Activated CD4-positive, alpha-beta T cell treated with anti-CD3 and anti-CD28 coated beads, Interleukin-2, amount 10 ng/mL, durations not matched to agents 24 days and 14 days (primary cell): ENCODE measurements at regions of chr9 and their contacts with region 1.

Region 1: DNA sequence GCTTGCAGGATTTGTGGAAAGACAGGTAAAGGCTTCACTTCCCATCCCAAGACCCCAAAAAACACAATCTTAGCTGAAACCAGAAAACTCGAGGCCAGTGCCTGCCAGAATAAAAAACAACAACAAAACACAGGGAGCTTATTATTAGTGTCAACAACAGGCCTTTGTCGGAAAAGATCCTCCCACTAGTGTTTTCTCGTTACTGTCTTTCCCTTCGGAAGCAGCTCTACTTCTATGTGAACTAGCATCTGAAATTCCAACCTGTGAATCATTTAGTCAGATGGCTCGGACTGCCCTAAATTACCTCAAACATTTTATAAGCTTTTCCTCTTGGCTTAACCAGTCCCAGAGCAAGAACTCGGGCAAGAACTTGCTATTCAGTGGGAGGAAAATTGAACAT is 122.2 kb upstream of the GNA14 start:
- DNase-seq: no peak
- H3K4me3 Mint-ChIP-seq: no peak overlapping the region
- H3K27ac Mint-ChIP-seq: no peak overlapping the region
- H3K4me1 Mint-ChIP-seq: no peaks in the 10 kb centered on the region
- H3K27me3 Mint-ChIP-seq: no peaks in the 10 kb centered on the region

Region 2: GRCh38 chr9:77731930-77732329 is 38.4 kb before region 1 on chr9:
- intact Hi-C with region 1: no loop called
- DNase-seq: peak; percentile 36
- H3K4me3 Mint-ChIP-seq: no peak overlapping the region
- H3K27ac Mint-ChIP-seq: no peak overlapping the region
- H3K4me1 Mint-ChIP-seq: peaks cover 11% of the 10 kb centered on the region
- H3K27me3 Mint-ChIP-seq: no peaks in the 10 kb centered on the region

Region 3: DNA sequence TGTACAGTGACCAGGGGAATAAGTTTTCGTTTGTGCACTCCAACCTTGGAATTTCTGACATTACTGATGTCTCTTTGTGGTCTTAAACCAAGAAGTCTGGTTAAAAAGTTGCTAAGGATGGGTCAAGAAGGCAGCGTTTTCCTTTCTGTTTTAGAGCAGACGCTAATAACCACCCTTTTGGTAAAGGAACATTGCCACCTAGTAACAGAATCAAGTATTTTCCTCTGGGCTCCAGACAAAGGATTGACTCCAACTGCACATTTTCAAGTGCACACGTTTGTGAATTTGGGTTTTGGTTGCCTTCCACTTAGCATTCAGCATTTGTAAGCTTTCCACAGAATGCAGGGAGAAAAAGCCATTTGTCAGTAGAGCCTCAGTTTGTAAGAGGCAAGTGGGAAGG is 443.4 kb after region 1 on chr9:
- intact Hi-C with region 1: loop called (anchors 10 kb)
- DNase-seq: peak; percentile 66
- H3K4me3 Mint-ChIP-seq: peak overlapping the region; percentile 34
- H3K27ac Mint-ChIP-seq: no peak overlapping the region
- H3K4me1 Mint-ChIP-seq: peaks cover 30% of the 10 kb centered on the region
- H3K27me3 Mint-ChIP-seq: no peaks in the 10 kb centered on the region